Gastrocnemius medialis (tissue), 4 donors: ENCODE measurements at regions of chr4 and their contacts with region 1.

Region 1: DNA sequence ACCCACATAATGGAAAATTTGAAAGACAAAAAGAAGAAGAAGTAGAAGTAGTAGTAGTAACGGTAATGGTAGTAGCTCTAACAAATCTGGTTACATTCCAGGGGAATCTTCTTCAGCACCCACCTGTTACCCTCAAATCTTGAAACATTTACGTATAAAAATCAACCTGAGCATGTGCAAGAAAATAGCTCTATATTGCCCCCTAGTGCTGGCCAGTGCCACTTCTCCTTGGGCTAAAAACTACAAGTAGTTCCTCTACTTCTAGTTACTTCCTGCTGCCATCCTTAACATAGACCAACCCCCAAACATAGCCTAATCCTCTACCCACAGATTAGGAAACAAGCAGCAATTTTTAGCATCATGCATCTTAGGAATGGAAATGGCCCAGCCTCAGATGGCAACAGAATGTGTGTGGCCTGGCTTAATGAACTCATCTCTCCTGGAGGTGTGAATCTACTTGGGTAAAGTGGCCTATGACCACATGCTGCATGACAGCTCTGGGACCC is 3.1 kb downstream of the PDGFC start:
- DNase-seq: peak; percentile 18 to 61
- ATAC-seq: peak in 1 of 2 donors; percentile 35
- H3K4me3 ChIP-seq: peak overlapping the region in 1 of 4 donors; percentile 78
- H3K27ac ChIP-seq: peak overlapping the region in 2 of 4 donors; percentile 25 to 35
- H3K4me1 ChIP-seq: peaks cover 22 to 26% of the 10 kb centered on the region in 2 donors
- H3K27me3 ChIP-seq: no peaks in the 10 kb centered on the region
- CTCF ChIP-seq: peak; percentile 46 to 82 (median 70)
- POLR2A ChIP-seq: no peak

Region 2: GRCh38 chr4:156475322-156475721 is 493.2 kb before region 1 on chr4:
- in situ Hi-C with region 1: no loop called
- intact Hi-C with region 1: loop called (anchors 5 kb)
- DNase-seq: no peak
- ATAC-seq: peak; percentile 50 to 66
- H3K4me3 ChIP-seq: no peak overlapping the region
- H3K27ac ChIP-seq: no peak overlapping the region
- H3K4me1 ChIP-seq: no peaks in the 10 kb centered on the region
- H3K27me3 ChIP-seq: no peaks in the 10 kb centered on the region
- CTCF ChIP-seq: peak in 4 of 5 experiments; percentile 20 to 47 (median 34)
- POLR2A ChIP-seq: no peak

Region 3: GRCh38 chr4:156584100-156584499 is 384.4 kb before region 1 on chr4:
- in situ Hi-C with region 1: no loop called
- intact Hi-C with region 1: loop called (anchors 5 kb)
- DNase-seq: no peak
- ATAC-seq: peak; percentile 56 to 64
- H3K4me3 ChIP-seq: no peak overlapping the region
- H3K27ac ChIP-seq: no peak overlapping the region
- H3K4me1 ChIP-seq: peaks cover 12 to 15% of the 10 kb centered on the region in 2 donors
- H3K27me3 ChIP-seq: no peaks in the 10 kb centered on the region
- CTCF ChIP-seq: no peak
- POLR2A ChIP-seq: no peak

Region 4: DNA sequence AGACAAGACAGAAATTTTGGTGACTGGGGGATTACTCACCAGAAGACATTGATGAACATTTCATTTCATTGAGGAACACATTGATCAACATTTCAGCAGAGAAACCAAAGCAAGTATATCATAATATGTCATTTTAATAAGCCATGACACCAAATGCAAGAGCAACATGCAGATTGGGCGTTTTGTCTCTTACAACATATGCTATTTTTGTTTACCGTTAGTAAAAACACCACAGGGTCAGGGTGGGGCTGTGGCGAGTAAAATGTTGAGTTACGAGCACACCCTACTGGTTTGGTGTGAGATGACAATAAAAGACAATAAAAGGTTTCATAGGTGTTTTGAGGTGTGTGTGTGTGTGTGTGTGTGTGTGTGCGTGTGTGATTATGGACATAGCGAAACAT is 291.4 kb before region 1 on chr4:
- in situ Hi-C with region 1: no loop called
- intact Hi-C with region 1: loop called (anchors 10 kb)
- DNase-seq: no peak
- ATAC-seq: peak in 1 of 2 donors; percentile 66
- H3K4me3 ChIP-seq: no peak overlapping the region
- H3K27ac ChIP-seq: no peak overlapping the region
- H3K4me1 ChIP-seq: peaks cover 0 to 6% of the 10 kb centered on the region in 2 donors
- H3K27me3 ChIP-seq: no peaks in the 10 kb centered on the region
- CTCF ChIP-seq: peak in 2 of 5 experiments; percentile 17 to 19
- POLR2A ChIP-seq: no peak

Region 5: GRCh38 chr4:156771171-156771837 is 197.2 kb before region 1 on chr4:
- in situ Hi-C with region 1: loop called in 2 of 4 experiments (anchors 10 to 25 kb)
- intact Hi-C with region 1: loop called (anchors 5 kb)
- DNase-seq: peak; percentile 55 to 74
- ATAC-seq: peak; percentile 94 to 97
- H3K4me3 ChIP-seq: peak overlapping the region; percentile 15 to 46 (median 24)
- H3K27ac ChIP-seq: peak overlapping the region; percentile 64 to 77 (median 76)
- H3K4me1 ChIP-seq: peaks cover 43 to 51% of the 10 kb centered on the region in 2 donors
- H3K27me3 ChIP-seq: no peaks in the 10 kb centered on the region
- CTCF ChIP-seq: no peak
- POLR2A ChIP-seq: no peak

Region 6: DNA sequence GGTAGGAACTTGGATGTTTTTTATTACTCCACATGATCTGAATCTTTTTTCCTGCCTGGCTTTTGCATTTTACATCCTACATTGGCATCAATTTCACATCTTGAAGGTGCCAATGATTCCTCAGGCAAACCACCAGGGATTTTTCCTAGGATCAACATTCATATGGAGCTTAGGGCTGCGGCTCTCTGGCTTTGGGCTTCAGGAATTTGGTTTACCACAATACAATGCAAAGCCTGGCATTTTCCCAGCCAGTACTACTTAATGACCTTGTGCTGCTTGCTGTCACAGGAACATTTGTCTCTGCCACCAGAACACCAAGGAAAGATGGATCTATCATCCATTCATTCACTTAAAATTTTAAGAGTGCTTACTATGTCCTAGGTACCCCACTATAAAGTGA is 177.7 kb before region 1 on chr4:
- in situ Hi-C with region 1: loop called in 1 of 4 experiments (anchors 25 kb)
- intact Hi-C with region 1: no loop called
- DNase-seq: no peak
- ATAC-seq: no peak
- H3K4me3 ChIP-seq: no peak overlapping the region
- H3K27ac ChIP-seq: no peak overlapping the region
- H3K4me1 ChIP-seq: peaks cover 17 to 23% of the 10 kb centered on the region in 2 donors
- H3K27me3 ChIP-seq: no peaks in the 10 kb centered on the region
- CTCF ChIP-seq: no peak
- POLR2A ChIP-seq: no peak

Region 7: GRCh38 chr4:157045507-157046127 is 77.1 kb after region 1 on chr4:
- in situ Hi-C with region 1: loop called in 1 of 4 experiments (anchors 10 kb)
- intact Hi-C with region 1: loop called (anchors 1 kb)
- DNase-seq: peak in 1 of 2 donors; percentile 13
- ATAC-seq: peak; percentile 80 to 82
- H3K4me3 ChIP-seq: no peak overlapping the region
- H3K27ac ChIP-seq: no peak overlapping the region
- H3K4me1 ChIP-seq: no peaks in the 10 kb centered on the region
- H3K27me3 ChIP-seq: no peaks in the 10 kb centered on the region
- CTCF ChIP-seq: peak; percentile 38 to 73 (median 69)
- POLR2A ChIP-seq: no peak